ENCODE measurements at regions of chr2 and their contacts with region 1.

Region 1: DNA sequence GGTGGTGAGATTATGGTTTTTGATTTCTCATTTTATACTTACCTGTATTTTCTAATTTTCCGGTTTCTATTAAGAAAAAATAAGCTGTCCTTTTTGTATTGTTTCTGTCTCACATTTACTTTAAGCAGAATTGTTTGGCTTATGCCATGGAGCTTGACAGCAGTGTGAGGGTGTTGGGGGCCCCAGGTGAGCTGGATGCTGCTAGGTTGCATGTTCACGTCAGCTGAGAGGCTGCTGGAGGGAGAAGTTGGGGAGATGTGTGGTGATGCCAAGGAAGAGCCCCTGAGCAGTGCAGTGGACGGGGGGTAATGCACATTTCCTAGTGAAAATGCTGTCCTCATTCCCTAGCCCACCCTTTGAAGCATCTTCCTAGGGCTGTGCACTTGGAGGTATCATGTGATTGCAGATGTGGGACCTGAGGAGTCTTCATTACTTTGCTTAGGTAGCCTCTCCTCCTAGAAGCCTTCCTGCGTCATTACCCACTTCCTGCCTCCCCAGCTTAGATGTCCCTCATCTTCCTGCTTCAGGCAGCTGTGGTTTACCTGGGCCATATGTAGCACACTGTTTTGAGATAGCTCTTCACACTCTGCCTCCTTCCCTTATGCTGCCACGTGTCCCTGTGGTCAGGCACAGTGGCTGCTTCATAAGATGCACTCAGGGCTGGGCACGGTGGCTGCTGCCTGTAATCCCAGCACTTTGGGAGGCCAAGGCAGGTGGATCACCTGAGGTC is 16.2 kb downstream of the ATG16L1 start:
- DNase-seq: peak; percentile 83
- H3K4me3 Mint-ChIP-seq: peak overlapping the region; percentile 54
- H3K27ac Mint-ChIP-seq: peak overlapping the region; percentile 95
- H3K4me1 Mint-ChIP-seq: peaks cover 76% of the 10 kb centered on the region
- H3K27me3 Mint-ChIP-seq: no peaks in the 10 kb centered on the region

Region 2: DNA sequence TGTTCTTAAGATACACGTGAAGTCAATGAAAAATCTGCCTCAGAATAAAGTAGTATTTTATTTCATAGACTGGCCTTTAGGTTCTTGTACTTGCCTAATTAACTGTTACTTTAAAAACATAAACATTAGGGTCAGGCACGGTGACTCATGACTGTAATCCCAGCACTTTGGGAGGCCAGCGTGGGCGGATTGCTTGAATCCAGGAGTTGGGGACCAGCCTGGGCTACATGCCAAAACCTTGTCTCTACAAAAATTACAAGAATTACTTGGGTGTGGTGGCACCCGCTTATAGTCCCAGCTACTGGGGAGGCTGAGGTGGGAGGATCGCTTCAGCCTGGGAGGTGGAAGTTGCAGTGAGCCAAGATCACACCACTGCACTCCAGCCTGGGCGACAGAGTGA is 413.6 kb before region 1 on chr2:
- intact Hi-C with region 1: loop called (anchors 5 kb)
- DNase-seq: no peak
- H3K4me3 Mint-ChIP-seq: no peak overlapping the region
- H3K27ac Mint-ChIP-seq: no peak overlapping the region
- H3K4me1 Mint-ChIP-seq: no peaks in the 10 kb centered on the region
- H3K27me3 Mint-ChIP-seq: no peaks in the 10 kb centered on the region

Region 3: GRCh38 chr2:233210843-233211547 is 56.7 kb before region 1 on chr2:
- intact Hi-C with region 1: no loop called
- DNase-seq: no peak
- H3K4me3 Mint-ChIP-seq: no peak overlapping the region
- H3K27ac Mint-ChIP-seq: no peak overlapping the region
- H3K4me1 Mint-ChIP-seq: peaks cover 5% of the 10 kb centered on the region
- H3K27me3 Mint-ChIP-seq: no peaks in the 10 kb centered on the region

Region 4: DNA sequence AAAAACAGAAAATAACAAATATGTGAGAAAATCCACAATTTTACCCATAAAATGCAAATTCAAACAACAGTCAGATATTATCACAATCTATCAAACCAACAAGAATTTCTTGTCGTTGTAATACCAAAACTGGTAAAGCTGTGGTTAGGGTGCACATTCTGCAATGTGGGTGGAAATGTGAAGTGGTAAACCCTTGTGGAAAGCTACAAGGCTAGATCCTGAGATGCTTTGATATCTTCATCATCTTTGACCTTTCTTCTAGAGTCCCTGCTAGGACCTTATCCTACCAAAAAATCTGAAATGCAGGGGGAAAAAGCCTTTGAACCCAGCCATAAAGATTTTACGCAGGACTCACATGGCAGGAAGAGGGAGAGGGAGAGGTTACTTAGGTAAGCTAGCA is 33.4 kb before region 1 on chr2:
- intact Hi-C with region 1: loop called (anchors 1 kb)
- DNase-seq: peak; percentile 8
- H3K4me3 Mint-ChIP-seq: peak overlapping the region; percentile 43
- H3K27ac Mint-ChIP-seq: peak overlapping the region; percentile 86
- H3K4me1 Mint-ChIP-seq: peaks cover 62% of the 10 kb centered on the region
- H3K27me3 Mint-ChIP-seq: no peaks in the 10 kb centered on the region

Region 5: GRCh38 chr2:233353769-233354499 is 86.3 kb after region 1 on chr2 and contains the start of gene DGKD:
- intact Hi-C with region 1: loop called (anchors 2 kb)
- DNase-seq: no peak
- H3K4me3 Mint-ChIP-seq: peak within 1 kb of the TSS; percentile 87
- H3K27ac Mint-ChIP-seq: peak within 1 kb of the TSS; percentile 90
- H3K4me1 Mint-ChIP-seq: peaks cover 67% of the 10 kb centered on the region
- H3K27me3 Mint-ChIP-seq: no peaks in the 10 kb centered on the region
- total RNA-seq, gene DGKD: 42.5 and 43.7 TPM in 2 replicates

Region 6: DNA sequence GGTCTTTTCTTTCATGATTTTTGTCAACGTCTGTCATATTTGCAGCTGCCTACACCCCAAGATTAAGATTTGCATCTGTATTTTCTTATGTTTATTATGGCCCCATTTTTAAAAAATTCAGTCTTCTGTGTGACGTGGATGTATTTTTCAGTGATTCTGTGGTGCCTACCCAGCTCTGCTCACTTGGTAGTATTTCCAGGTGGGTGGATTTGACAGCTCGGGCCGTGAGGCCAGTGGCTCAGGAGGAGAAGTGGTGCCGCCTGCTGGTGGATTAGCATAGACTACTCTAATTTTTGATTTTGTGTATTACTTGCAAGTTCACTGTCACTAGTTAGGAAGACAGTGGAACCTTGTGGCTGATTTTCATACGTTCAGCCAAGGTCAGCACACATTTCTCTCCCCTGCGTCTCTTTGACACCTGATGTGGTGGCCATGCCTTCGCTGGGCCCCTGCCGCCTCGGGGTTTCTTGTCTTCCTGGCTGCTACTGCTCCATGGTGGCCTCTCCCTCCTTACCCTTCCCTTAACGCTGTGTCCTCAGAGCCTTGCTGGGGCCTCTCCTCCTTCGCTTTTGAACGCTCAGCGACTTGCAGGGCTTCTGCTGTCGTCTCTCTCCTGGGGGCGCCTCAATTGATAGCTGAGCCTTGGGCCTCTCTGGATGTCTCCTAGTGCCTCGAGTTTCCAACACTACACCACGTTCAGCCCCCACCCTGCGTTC is 175.9 kb after region 1 on chr2:
- intact Hi-C with region 1: loop called (anchors 1 kb)
- DNase-seq: peak; percentile 67
- H3K4me3 Mint-ChIP-seq: no peak overlapping the region
- H3K27ac Mint-ChIP-seq: peak overlapping the region; percentile 56
- H3K4me1 Mint-ChIP-seq: peaks cover 21% of the 10 kb centered on the region
- H3K27me3 Mint-ChIP-seq: no peaks in the 10 kb centered on the region

Region 7: GRCh38 chr2:233566141-233566960 is 298.7 kb after region 1 on chr2 and contains the start of gene USP40:
- intact Hi-C with region 1: loop called (anchors 10 kb)
- DNase-seq: peak; percentile 37
- H3K4me3 Mint-ChIP-seq: peak within 1 kb of the TSS; percentile 94
- H3K27ac Mint-ChIP-seq: peak within 1 kb of the TSS; percentile 93
- H3K4me1 Mint-ChIP-seq: peaks cover 19% of the 10 kb centered on the region
- H3K27me3 Mint-ChIP-seq: peaks cover 20% of the 10 kb centered on the region
- total RNA-seq, gene USP40: 10.1 and 11.2 TPM in 2 replicates